GM12878 (cell line): ENCODE measurements at regions of chr22 and their contacts with region 1.

Region 1: GRCh38 chr22:28829358-28830181 is 29.2 kb upstream of the XBP1 start:
- DNase-seq: no peak
- ATAC-seq: peak; percentile 90
- H3K4me3 ChIP-seq: no peak overlapping the region
- H3K27ac ChIP-seq: no peak overlapping the region
- H3K4me1 ChIP-seq: peaks cover 4% of the 10 kb centered on the region
- H3K27me3 ChIP-seq: no peaks in the 10 kb centered on the region
- CTCF ChIP-seq: peak; percentile 96 to 98 (median 96)
- EP300 ChIP-seq: no peak
- POLR2A ChIP-seq: no peak
- RAD21 ChIP-seq: peak; percentile 99

Region 2: DNA sequence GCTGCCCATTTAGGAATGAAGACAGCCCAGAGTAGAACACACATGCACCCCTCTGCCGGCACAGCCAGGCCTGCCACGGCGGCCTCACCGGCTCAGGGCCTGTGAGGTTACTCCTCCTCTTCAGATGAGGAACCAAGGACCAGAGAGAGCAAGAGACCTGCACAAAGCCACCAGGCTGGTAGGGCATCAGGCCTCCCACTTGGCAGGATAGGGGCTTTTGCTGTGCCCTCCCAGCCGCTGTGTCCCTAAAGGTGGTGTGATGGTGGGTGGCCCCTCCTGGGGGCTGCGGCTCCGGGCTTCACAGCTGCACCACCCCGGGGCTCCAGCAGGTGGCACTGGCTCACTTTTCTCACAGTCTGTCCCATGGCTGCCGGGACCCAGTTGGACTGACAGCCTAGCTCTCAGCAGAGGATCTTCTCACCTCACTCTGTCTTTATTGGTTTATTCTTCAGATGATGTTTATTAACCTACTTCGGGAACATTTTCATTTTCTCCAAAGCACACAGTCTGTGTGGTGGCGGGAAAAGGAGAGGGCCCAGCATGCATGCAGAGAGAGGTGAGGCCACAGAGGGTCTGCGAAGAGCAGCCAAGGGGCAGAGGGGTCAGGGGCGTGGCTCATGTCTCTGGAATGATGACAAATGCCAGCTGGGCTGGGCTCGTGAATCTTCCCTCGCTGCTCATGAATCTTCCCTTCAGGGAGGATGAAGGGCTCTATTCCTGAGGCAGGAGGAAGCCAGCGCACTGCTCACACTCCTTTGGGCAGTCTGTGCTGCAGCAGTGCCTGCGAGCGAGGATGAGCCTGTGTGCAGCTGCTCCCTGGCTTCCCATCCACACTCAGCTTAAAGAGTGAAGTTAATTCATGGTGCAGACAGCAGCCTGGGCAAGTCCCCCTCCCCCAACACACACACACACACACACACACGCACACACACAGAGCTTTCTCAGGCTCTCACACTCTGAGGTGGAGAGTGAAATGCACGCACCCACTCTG is 809.4 kb before region 1 on chr22:
- CTCF ChIA-PET with region 1: no interaction called
- POLR2A ChIA-PET with region 1: no interaction called
- RAD21 ChIA-PET with region 1: no interaction called
- SMC1A ChIA-PET with region 1: no interaction called
- in situ Hi-C with region 1: loop called (anchors 10 kb)
- intact Hi-C with region 1: loop called (anchors 10 kb)
- DNase-seq: no peak
- ATAC-seq: peak; percentile 95
- H3K4me3 ChIP-seq: no peak overlapping the region
- H3K27ac ChIP-seq: no peak overlapping the region
- H3K4me1 ChIP-seq: no peaks in the 10 kb centered on the region
- H3K27me3 ChIP-seq: 0 out of 4 replicates have a peak, but pooled peaks cover 0 to 1% of the 10 kb centered on the region in 2 experiments
- CTCF ChIP-seq: peak; percentile 93 to 96 (median 95)
- EP300 ChIP-seq: no peak
- POLR2A ChIP-seq: no peak
- RAD21 ChIP-seq: peak; percentile 84

Region 3: GRCh38 chr22:28594797-28595462 is 234.6 kb before region 1 on chr22:
- CTCF ChIA-PET with region 1: interaction called, 152 read pairs
- POLR2A ChIA-PET with region 1: no interaction called
- RAD21 ChIA-PET with region 1: interaction called, 67 read pairs
- SMC1A ChIA-PET with region 1: interaction called, 137 read pairs
- in situ Hi-C with region 1: loop called (anchors 5 kb)
- intact Hi-C with region 1: loop called (anchors 1 kb)
- DNase-seq: no peak
- ATAC-seq: peak; percentile 93
- H3K4me3 ChIP-seq: no peak overlapping the region
- H3K27ac ChIP-seq: no peak overlapping the region
- H3K4me1 ChIP-seq: no peaks in the 10 kb centered on the region
- H3K27me3 ChIP-seq: no peaks in the 10 kb centered on the region
- CTCF ChIP-seq: peak; percentile 50 to 79 (median 67); a peak in 5 of 6 replicates
- EP300 ChIP-seq: no peak
- POLR2A ChIP-seq: no peak
- RAD21 ChIP-seq: peak; percentile 86

Region 4: GRCh38 chr22:28607795-28608194 is 221.8 kb before region 1 on chr22:
- CTCF ChIA-PET with region 1: interaction called, 24 read pairs
- POLR2A ChIA-PET with region 1: no interaction called
- RAD21 ChIA-PET with region 1: interaction called, 6 read pairs
- SMC1A ChIA-PET with region 1: interaction called, 21 read pairs
- in situ Hi-C with region 1: loop called (anchors 5 kb)
- intact Hi-C with region 1: no loop called
- DNase-seq: no peak
- ATAC-seq: no peak
- H3K4me3 ChIP-seq: no peak overlapping the region
- H3K27ac ChIP-seq: no peak overlapping the region
- H3K4me1 ChIP-seq: no peaks in the 10 kb centered on the region
- H3K27me3 ChIP-seq: no peaks in the 10 kb centered on the region; a peak in 1 of 4 replicates
- CTCF ChIP-seq: no peak
- EP300 ChIP-seq: no peak
- POLR2A ChIP-seq: no peak
- RAD21 ChIP-seq: no peak

Region 5: GRCh38 chr22:28772633-28773460 is 56.7 kb before region 1 on chr22 and contains the start of gene CCDC117:
- CTCF ChIA-PET with region 1: interaction called, 8 read pairs
- POLR2A ChIA-PET with region 1: no interaction called
- RAD21 ChIA-PET with region 1: no interaction called
- SMC1A ChIA-PET with region 1: interaction called, 4 read pairs
- in situ Hi-C with region 1: no loop called
- intact Hi-C with region 1: loop called (anchors 10 kb)
- DNase-seq: peak; percentile 84
- ATAC-seq: peak; percentile 93
- H3K4me3 ChIP-seq: peak within 1 kb of the TSS; percentile 96
- H3K27ac ChIP-seq: peak within 1 kb of the TSS; percentile 89
- H3K4me1 ChIP-seq: no peaks in the 10 kb centered on the region
- H3K27me3 ChIP-seq: no peaks in the 10 kb centered on the region
- CTCF ChIP-seq: peak in 2 of 3 experiments; percentile 12 to 19; a peak in 2 of 6 replicates
- EP300 ChIP-seq: peak; percentile 5 to 40; a peak in 1 of 4 replicates
- POLR2A ChIP-seq: peak; percentile 82
- RAD21 ChIP-seq: peak; percentile 13; the same call in 1 of the 2 replicates
- polyA plus RNA-seq, gene CCDC117: 6.3 to 8.3 TPM

Region 6: GRCh38 chr22:28800308-28801077 is 29.1 kb before region 1 on chr22 and contains the start of gene XBP1:
- CTCF ChIA-PET with region 1: interaction called, 10 read pairs
- POLR2A ChIA-PET with region 1: interaction called, 6 read pairs
- RAD21 ChIA-PET with region 1: interaction called, 7 read pairs
- SMC1A ChIA-PET with region 1: interaction called, 79 read pairs
- in situ Hi-C with region 1: no loop called
- intact Hi-C with region 1: loop called (anchors 2 kb)
- DNase-seq: peak; percentile 63
- ATAC-seq: peak; percentile 92
- H3K4me3 ChIP-seq: peak within 1 kb of the TSS; percentile 83
- H3K27ac ChIP-seq: peak within 1 kb of the TSS; percentile 95
- H3K4me1 ChIP-seq: peaks cover 12% of the 10 kb centered on the region
- H3K27me3 ChIP-seq: no peaks in the 10 kb centered on the region
- CTCF ChIP-seq: no peak
- EP300 ChIP-seq: no peak
- POLR2A ChIP-seq: peak; percentile 98
- RAD21 ChIP-seq: no peak
- polyA plus RNA-seq, gene XBP1: 44.5 to 67.3 TPM

Region 7: GRCh38 chr22:28817919-28818909 is 11.4 kb before region 1 on chr22:
- CTCF ChIA-PET with region 1: interaction called, 48 read pairs
- POLR2A ChIA-PET with region 1: interaction called, 3 read pairs
- RAD21 ChIA-PET with region 1: interaction called, 16 read pairs
- SMC1A ChIA-PET with region 1: interaction called, 35 read pairs
- in situ Hi-C with region 1: no loop called
- intact Hi-C with region 1: no loop called
- DNase-seq: no peak
- ATAC-seq: peak; percentile 50
- H3K4me3 ChIP-seq: 0 out of 2 replicates have a peak overlapping the region, but pooled peaks have one; percentile 8
- H3K27ac ChIP-seq: peak overlapping the region; percentile 49
- H3K4me1 ChIP-seq: peaks cover 42% of the 10 kb centered on the region
- H3K27me3 ChIP-seq: no peaks in the 10 kb centered on the region
- CTCF ChIP-seq: no peak
- EP300 ChIP-seq: no peak
- POLR2A ChIP-seq: no peak
- RAD21 ChIP-seq: no peak